ENCODE measurements at regions of chr10 and their contacts with region 1.

Region 1: GRCh38 chr10:80413271-80413996 is 5.1 kb downstream of the PRXL2A start:
- DNase-seq: peak; percentile 76
- H3K4me3 ChIP-seq: peak overlapping the region; percentile 0 to 30 (median 14)
- H3K27ac ChIP-seq: no peak overlapping the region
- H3K4me1 ChIP-seq: peaks cover 46% of the 10 kb centered on the region
- H3K27me3 ChIP-seq: no peaks in the 10 kb centered on the region
- CTCF ChIP-seq: no peak

Region 2: GRCh38 chr10:80429521-80429966 is 16.1 kb after region 1 on chr10:
- CTCF ChIA-PET with region 1: no interaction called
- dilution Hi-C with region 1: no loop called
- in situ Hi-C with region 1: no loop called
- intact Hi-C with region 1: loop called (anchors 2 kb)
- DNase-seq: peak; percentile 92
- H3K4me3 ChIP-seq: no peak overlapping the region
- H3K27ac ChIP-seq: peak overlapping the region; percentile 65
- H3K4me1 ChIP-seq: peaks cover 14% of the 10 kb centered on the region
- H3K27me3 ChIP-seq: no peaks in the 10 kb centered on the region
- CTCF ChIP-seq: peak in 1 of 2 donors; percentile 18

Region 3: DNA sequence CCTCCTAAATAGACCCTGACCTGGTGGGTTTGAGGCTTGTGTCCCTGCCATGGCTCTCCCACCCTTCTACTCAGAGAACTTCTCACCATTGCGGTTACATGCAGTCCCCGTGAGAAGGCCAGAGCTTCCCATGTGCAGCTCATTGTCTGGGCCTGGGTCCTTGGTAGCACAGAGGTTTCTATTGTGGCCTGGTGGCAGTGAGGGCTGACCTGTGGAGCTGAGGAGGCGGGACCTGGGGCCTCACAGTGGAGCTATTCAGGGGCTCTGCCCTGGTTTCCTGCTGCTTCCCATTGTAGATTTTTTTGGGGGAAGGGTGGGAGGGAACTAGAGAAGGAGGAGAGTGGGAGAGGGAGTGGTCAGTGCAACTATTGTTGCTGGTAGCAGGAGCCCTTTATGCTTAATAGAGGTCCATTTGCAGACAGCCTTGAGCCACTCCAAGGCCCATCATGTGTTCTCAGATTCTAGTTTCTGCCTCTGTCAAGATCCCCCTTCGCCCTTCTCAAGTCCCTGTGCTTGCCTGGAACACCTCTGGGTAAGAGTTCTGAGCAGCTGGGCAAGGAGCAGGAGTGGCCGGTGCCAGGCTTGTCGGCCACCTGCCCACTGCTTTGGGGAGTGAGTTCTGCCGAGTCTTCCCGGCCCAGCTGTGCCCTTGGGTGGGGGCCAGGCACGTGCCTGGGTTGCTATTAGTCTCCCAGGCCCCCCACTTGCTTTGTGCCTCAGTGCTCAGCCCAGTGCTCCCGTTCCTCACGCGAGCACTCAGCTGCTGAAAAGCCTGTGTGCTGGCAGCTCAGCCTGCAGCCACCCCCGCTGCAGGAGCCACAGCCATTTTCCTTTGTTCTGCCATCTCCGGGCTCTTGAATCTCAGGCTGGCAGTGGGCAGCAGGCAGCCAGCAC is 51.4 kb after region 1 on chr10:
- CTCF ChIA-PET with region 1: interaction called, 10 read pairs
- dilution Hi-C with region 1: no loop called
- in situ Hi-C with region 1: no loop called
- intact Hi-C with region 1: no loop called
- DNase-seq: no peak
- H3K4me3 ChIP-seq: peak overlapping the region in 1 of 3 experiments; percentile 17
- H3K27ac ChIP-seq: peak overlapping the region; percentile 17
- H3K4me1 ChIP-seq: peaks cover 87% of the 10 kb centered on the region
- H3K27me3 ChIP-seq: no peaks in the 10 kb centered on the region
- CTCF ChIP-seq: no peak

Measured in mammary epithelial cell (primary cell).